ENCODE measurements at regions of chr16 and their contacts with region 1.

Region 1: DNA sequence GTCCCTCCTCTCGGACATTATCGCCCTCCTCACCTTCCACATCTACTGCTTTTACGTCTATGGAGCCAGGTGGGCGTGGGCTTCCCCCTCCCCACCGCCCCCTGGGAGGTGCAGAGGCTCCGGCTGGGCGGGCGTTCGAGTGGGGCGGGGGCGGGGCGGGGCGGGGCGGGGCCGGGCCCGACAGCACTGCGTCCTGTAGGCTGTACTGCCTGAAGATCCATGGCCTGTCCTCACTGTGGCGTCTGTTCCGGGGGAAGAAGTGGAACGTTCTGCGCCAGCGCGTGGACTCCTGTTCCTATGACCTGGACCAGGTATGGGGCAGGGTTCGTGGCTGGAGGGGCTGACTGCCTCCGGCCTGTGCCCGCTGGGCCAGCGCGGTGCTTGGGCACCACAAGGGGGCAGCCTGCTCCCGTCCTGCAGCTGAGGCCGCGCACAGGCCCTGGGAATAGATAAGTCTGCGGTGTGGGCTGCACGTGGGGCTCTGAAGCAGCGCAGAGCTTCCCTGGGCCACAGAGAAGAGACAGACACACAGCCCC is 9.2 kb downstream of the PIGQ start:
- DNase-seq: peak; percentile 82
- ATAC-seq: peak; percentile 95
- H3K4me3 Mint-ChIP-seq: peak overlapping the region; percentile 50
- H3K27ac Mint-ChIP-seq: no peak overlapping the region
- H3K4me1 Mint-ChIP-seq: peaks cover 2% of the 10 kb centered on the region
- H3K27me3 Mint-ChIP-seq: no peaks in the 10 kb centered on the region
- CTCF ChIP-seq: no peak

Region 2: DNA sequence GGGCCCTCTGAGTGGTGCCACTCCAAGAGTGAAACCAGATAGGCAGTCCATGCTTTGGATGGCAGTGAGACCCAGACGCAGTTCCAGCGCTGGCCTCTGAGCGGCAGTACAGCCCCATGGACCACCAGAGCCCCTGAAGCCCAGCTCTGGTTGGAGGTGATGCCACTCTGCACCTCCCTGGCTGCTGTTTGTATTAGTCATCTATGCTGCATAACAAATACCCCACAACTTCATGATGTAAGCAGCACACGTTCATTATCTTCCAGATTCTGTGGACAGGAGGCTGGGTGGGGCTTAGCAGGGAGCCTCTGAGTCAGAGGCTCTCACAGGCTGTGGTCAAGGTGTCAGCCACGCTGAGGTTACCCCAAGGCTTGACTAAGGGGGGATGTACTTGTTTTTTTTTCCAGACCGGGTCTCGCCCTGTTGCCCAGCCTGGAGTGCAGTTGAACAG is 187.0 kb before region 1 on chr16:
- CTCF ChIA-PET with region 1: no interaction called
- POLR2A ChIA-PET with region 1: no interaction called
- intact Hi-C with region 1: loop called (anchors 1 kb)
- DNase-seq: peak; percentile 64
- ATAC-seq: peak; percentile 91
- H3K4me3 Mint-ChIP-seq: no peak overlapping the region
- H3K27ac Mint-ChIP-seq: peak overlapping the region; percentile 41
- H3K4me1 Mint-ChIP-seq: peaks cover 16% of the 10 kb centered on the region
- H3K27me3 Mint-ChIP-seq: no peaks in the 10 kb centered on the region
- CTCF ChIP-seq: no peak

Region 3: DNA sequence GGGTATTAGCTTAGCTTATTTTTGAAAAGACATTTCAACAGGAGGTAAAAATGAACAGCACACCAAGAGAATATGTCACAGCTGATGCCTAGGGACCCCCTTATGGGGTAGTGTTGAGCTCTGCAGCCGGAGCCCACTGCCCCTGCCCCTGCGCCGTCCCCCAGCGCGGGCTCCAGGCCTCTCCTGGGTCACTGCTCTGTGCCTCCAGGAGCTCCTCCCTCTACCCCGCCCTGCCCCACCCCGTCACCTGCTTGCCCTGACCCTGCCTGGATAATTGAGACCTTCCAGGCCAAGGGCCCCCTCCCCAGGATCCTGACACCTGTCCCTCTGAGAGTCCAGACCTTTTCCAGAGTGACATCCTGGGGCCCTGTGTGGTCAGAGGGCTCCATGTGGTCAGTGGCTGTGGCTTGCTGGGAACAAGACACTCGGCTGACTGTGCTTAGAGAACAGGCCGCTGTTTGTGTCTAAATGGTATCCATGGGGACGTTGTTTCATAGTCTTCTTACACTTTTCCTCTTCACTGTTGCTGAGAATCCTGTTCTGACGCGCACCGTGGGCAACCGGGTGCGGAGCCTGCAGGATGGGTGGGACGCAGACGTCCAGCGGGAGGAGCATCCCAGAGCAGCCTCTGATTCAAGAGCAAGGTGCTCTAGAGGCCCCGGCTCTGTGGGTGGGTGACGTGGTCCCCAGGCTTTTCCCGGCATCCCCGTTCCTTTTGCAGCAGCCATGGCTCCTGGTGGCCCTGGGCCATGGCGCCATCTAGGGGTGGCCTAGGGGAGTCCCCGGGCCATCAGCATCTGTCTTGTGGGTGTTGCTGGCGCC is 31.8 kb after region 1 on chr16:
- CTCF ChIA-PET with region 1: interaction called, 3 read pairs
- POLR2A ChIA-PET with region 1: interaction called, 3 read pairs
- intact Hi-C with region 1: loop called (anchors 2 kb)
- DNase-seq: no peak
- ATAC-seq: peak; percentile 68
- H3K4me3 Mint-ChIP-seq: no peak overlapping the region
- H3K27ac Mint-ChIP-seq: no peak overlapping the region
- H3K4me1 Mint-ChIP-seq: peaks cover 22% of the 10 kb centered on the region
- H3K27me3 Mint-ChIP-seq: no peaks in the 10 kb centered on the region
- CTCF ChIP-seq: no peak

Region 4: DNA sequence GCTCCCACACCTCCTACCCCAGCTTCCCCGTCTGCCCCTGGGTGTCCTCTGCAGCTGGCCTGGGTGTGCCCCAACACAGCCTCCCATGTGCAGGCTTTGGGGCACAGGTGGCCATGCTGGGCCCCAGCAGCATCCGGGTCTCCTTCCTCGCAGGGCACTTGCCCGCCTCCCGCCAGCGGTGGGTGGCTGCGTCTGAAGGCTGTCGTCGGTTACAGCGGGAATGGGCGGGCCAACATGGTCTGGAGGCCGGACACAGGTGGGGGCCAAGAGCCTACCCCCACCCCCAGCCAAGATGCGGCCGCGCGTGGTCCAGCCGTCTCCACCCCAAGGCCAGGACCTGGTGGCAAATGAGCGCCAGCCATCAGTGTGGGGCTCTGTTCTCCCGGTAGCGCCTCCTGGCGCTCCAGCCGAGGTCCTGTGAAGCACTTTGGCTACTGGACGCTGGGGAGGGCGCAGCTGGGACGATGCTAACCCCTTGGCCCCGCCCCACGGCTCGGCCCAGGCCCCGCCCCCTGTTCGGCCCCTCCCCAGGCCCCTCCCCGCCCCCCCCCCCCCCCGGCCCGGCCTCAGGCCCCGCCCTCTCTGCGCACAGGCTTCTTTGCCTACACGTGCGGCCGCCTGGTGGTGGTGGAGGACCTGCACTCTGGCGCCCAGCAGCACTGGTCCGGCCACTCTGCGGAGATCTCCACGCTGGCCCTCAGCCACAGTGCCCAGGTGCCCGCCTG is 81.7 kb after region 1 on chr16:
- CTCF ChIA-PET with region 1: interaction called, 4 read pairs
- POLR2A ChIA-PET with region 1: no interaction called
- intact Hi-C with region 1: loop called (anchors 1 kb)
- DNase-seq: peak; percentile 61
- ATAC-seq: peak; percentile 91
- H3K4me3 Mint-ChIP-seq: peak overlapping the region; percentile 55
- H3K27ac Mint-ChIP-seq: no peak overlapping the region
- H3K4me1 Mint-ChIP-seq: peaks cover 7% of the 10 kb centered on the region
- H3K27me3 Mint-ChIP-seq: no peaks in the 10 kb centered on the region
- CTCF ChIP-seq: no peak

Region 5: DNA sequence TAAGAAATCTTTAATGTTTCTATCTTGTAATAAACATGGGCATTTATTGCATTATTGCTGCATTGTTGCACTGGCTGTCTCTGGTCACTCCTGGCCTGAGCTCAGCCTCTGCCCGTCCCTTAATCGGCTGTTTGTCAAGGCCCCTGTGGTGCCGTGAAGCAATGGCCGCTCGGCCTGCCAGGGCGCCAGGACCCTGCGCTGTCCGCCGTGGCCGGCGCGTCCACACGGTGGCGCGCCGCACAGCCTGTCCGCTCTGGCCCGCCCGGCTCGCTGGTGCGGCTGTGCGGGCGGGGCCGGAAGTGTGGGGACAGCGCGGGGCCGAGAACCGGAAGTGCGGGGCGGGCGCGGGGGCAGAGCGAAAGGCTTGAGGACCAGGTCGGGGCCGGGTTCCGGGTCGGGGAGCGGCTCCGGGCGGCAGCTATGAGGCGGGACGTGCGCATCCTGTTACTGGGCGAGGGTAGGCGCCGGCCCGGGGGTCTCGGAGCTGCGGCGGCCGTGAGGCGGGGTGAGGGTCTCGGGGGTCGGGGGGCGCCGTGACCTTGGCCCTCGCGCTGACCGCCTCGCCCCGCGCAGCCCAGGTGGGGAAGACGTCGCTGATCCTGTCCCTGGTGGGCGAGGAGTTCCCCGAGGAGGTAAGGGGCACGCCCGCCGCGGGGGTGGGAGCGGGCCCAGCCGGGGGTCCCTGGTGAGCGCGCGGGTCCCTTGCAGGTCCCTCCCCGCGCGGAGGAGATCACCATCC is 89.0 kb after region 1 on chr16 and contains the start of gene RHOT2:
- CTCF ChIA-PET with region 1: interaction called, 4 read pairs
- POLR2A ChIA-PET with region 1: no interaction called
- intact Hi-C with region 1: loop called (anchors 2 kb)
- DNase-seq: peak; percentile 96
- ATAC-seq: peak; percentile 98
- H3K4me3 Mint-ChIP-seq: peak within 1 kb of the TSS; percentile 80
- H3K27ac Mint-ChIP-seq: peak within 1 kb of the TSS; percentile 80
- H3K4me1 Mint-ChIP-seq: peaks cover 12% of the 10 kb centered on the region
- H3K27me3 Mint-ChIP-seq: no peaks in the 10 kb centered on the region
- CTCF ChIP-seq: peak; percentile 7
- total RNA-seq, gene RHOT2: 141 and 170 TPM in 2 replicates

Region 6: GRCh38 chr16:709566-710499 is 130.9 kb after region 1 on chr16:
- CTCF ChIA-PET with region 1: no interaction called
- POLR2A ChIA-PET with region 1: no interaction called
- intact Hi-C with region 1: no loop called
- DNase-seq: no peak
- ATAC-seq: no peak
- H3K4me3 Mint-ChIP-seq: no peak overlapping the region
- H3K27ac Mint-ChIP-seq: no peak overlapping the region
- H3K4me1 Mint-ChIP-seq: peaks cover 8% of the 10 kb centered on the region
- H3K27me3 Mint-ChIP-seq: peaks cover 25% of the 10 kb centered on the region
- CTCF ChIP-seq: no peak

Region 7: DNA sequence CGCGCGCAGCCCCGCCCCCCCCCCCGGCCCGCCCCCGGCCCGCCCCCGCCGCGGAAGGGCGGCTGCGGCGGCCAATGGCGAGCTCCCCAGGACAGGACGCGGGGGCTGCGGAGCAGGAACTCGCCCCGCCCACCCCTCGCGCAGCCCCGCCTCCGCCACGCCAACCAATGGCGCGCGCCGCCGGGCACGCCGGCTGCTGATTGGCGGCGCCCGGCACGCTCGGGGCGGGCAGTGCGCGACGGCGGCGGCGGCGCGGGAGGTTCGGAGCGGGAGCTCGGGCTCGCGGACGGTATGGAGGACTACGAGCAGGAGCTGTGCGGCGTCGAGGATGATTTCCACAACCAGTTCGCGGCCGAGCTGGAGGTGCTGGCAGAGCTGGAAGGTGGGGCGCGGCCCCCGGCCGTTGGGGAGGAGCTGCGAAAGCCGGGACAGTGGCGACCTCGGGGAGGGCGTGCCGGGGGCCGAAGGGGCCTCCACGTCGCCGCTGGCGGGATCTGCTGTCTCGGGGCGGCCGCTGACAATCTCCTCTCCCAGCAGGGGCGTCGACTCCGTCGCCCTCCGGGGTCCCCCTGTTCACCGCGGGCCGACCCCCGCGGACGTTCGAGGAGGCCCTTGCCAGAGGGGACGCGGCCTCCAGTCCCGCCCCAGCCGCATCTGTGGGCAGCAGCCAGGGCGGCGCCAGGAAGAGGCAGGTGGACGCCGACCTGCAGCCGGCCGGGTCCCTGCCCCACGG is 209.6 kb after region 1 on chr16 and contains the start of gene CHTF18:
- CTCF ChIA-PET with region 1: no interaction called
- POLR2A ChIA-PET with region 1: no interaction called
- intact Hi-C with region 1: loop called (anchors 2 kb)
- DNase-seq: peak; percentile 94
- ATAC-seq: peak; percentile 97
- H3K4me3 Mint-ChIP-seq: peak within 1 kb of the TSS; percentile 86
- H3K27ac Mint-ChIP-seq: peak within 1 kb of the TSS; percentile 56
- H3K4me1 Mint-ChIP-seq: peaks cover 7% of the 10 kb centered on the region
- H3K27me3 Mint-ChIP-seq: no peaks in the 10 kb centered on the region
- CTCF ChIP-seq: no peak
- total RNA-seq, gene CHTF18: 42.4 and 45.5 TPM in 2 replicates

Measured in activated B cell treated with CpG ODN at 0.5 μM for 24 hours (primary cell).